Posterior vena cava (tissue), 2 donors: ENCODE measurements at regions of chr9 and their contacts with region 1.

Region 1: DNA sequence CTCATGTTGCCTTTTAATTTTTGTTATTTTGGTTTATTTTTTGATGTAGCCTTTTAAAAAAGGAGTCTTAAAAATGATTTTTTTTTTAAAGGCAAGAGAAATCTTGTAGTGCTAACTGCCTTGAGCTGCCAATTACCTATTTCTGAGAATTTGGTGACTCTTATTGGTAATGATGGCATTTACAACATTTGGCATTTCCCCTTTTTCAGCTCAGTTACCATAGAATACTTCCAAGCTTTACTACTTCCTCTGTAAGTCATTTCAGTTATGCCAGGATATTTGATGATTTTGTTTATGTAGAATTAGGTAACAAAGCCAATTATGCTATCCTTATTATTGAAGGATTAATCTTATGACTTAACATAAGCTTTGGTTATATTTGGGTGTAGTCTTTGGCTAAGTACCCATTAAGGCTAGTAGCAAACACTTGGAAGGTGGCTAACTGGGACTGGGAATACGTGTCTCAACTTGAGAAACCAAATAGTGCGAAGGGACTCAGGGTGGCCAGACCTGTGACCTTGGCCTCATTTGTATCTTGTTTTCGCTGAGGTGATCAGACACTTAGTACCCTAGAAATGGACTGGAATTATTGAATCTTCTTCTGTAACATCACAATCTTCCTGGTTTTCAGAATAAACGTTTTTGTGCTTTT is 27.7 kb downstream of the CDC37L1 start:
- DNase-seq: no peak

Region 2: DNA sequence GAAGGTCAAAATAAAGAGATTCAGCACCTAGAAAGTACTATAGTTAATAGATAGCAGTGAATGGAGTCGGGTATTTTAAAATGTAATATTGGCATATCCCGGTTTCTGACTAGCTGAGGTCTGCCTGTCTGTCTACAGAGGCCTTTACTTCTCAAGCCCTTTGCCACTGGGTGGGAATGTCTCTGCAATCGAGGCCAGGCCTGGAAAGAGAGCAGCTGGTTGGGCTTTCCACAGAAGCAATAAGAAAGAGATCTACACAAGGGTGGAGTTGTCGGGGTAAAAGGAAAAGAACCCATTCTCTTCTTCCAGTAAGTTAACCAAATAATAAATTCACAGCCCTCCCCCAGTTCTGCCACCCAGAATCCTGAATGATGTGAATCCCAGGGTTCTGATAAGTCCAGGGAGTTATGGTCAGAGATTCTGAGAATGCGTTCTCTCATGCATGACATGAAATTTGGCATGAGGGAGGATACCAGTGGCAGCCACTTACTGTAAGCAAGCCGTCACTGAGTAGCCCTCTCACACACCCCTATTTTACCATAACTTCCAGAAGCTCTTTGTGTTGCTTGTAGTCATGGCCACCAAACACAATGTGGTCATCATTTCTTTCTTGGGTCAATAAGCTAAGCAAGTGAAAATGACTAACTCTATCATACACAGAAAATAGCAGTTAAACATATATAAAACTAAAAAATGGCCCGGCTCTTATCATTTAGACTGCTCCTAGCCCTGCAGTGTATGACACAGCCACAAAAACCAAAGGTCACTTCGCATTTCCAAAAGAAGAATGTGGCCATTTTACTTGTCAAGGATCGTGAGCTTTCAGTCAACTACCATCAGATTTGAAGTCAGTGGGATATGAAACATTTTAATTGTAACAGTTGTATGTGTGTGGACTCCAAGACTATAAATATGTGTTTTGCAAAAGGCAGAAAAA is 592.3 kb before region 1 on chr9:
- intact Hi-C with region 1: loop called in 1 of 2 experiments (anchors 5 kb)
- DNase-seq: no peak